ENCODE measurements at regions of chr3 and their contacts with region 1.

Region 1: DNA sequence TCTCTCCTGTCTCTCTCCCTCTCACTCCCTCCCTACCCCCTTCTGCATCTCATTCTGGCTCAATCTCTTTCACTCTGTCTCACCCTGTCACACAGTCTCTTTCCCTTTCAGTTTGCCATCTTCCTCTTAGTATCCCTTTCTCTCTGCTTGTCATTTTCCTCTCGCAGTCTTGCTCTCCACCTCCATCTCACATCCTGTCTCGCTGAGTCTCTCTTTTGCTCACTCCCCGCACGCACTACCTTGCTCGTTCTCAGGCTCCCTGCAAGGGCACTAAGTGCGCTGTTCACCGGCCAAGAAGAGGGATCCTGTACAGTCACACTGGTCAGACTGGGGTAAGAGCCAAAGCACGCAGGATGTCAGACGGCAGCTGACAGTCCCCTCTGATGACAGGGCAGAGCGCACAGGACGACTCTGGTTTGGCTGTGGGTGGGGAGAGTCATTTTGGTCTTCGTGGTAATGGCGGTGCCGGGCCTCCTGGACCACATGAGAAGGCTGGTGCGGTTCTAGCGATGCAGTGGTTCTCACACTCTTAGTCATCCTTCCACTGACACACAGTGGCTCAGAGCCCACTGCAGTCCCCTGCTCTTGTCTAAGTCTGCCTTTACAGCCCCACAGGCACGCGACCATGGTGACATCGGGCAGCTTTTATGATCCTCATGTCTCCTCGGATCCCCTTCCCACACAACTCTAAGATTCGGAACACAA is 356.8 kb downstream of the FOXP1 start:
- DNase-seq: no peak
- H3K4me3 ChIP-seq: no peak overlapping the region
- H3K27ac ChIP-seq: peak overlapping the region; percentile 66
- H3K4me1 ChIP-seq: peaks cover 24% of the 10 kb centered on the region
- H3K27me3 ChIP-seq: no peaks in the 10 kb centered on the region
- CTCF ChIP-seq: no peak
- POLR2A ChIP-seq: no peak

Region 2: GRCh38 chr3:71109241-71109976 is 117.3 kb before region 1 on chr3:
- CTCF ChIA-PET with region 1: interaction called, 4 read pairs
- POLR2A ChIA-PET with region 1: no interaction called
- dilution Hi-C with region 1: no loop called
- intact Hi-C with region 1: loop called (anchors 2 kb)
- DNase-seq: peak; percentile 86
- H3K4me3 ChIP-seq: peak overlapping the region in 2 of 3 experiments; percentile 28 to 56
- H3K27ac ChIP-seq: peak overlapping the region; percentile 97
- H3K4me1 ChIP-seq: peaks cover 63% of the 10 kb centered on the region
- H3K27me3 ChIP-seq: no peaks in the 10 kb centered on the region
- CTCF ChIP-seq: no peak
- POLR2A ChIP-seq: no peak

Region 3: GRCh38 chr3:72447059-72447946 is 1220.6 kb after region 1 on chr3:
- CTCF ChIA-PET with region 1: no interaction called
- POLR2A ChIA-PET with region 1: no interaction called
- dilution Hi-C with region 1: no loop called
- intact Hi-C with region 1: no loop called
- DNase-seq: peak; percentile 84
- H3K4me3 ChIP-seq: peak overlapping the region in 2 of 3 experiments; percentile 23 to 95
- H3K27ac ChIP-seq: no peak overlapping the region
- H3K4me1 ChIP-seq: peaks cover 10% of the 10 kb centered on the region
- H3K27me3 ChIP-seq: peaks cover 11 to 14% of the 10 kb centered on the region in 2 experiments
- CTCF ChIP-seq: no peak
- POLR2A ChIP-seq: no peak